ENCODE measurements at regions of chr16 and their contacts with region 1.

Region 1: GRCh38 chr16:66167564-66168291 is 198.8 kb upstream of the CDH5 start:
- DNase-seq: peak in 2 of 3 donors; percentile 13 to 26
- H3K4me3 ChIP-seq: peak overlapping the region in 1 of 3 experiments; percentile 47
- H3K4me3 Mint-ChIP-seq: peak overlapping the region in 1 of 2 donors; percentile 6
- H3K27ac ChIP-seq: peak overlapping the region; percentile 12 to 61
- H3K27ac Mint-ChIP-seq: peak overlapping the region; percentile 54 to 80 (median 68)
- H3K4me1 ChIP-seq: peaks cover 30 to 43% of the 10 kb centered on the region in 2 donors
- H3K4me1 Mint-ChIP-seq: peaks cover 40% of the 10 kb centered on the region
- H3K27me3 ChIP-seq: no peaks in the 10 kb centered on the region
- H3K27me3 Mint-ChIP-seq: peaks cover 0 to 4% (median 0%) of the 10 kb centered on the region in 3 donors
- CTCF ChIP-seq: no peak

Region 2: DNA sequence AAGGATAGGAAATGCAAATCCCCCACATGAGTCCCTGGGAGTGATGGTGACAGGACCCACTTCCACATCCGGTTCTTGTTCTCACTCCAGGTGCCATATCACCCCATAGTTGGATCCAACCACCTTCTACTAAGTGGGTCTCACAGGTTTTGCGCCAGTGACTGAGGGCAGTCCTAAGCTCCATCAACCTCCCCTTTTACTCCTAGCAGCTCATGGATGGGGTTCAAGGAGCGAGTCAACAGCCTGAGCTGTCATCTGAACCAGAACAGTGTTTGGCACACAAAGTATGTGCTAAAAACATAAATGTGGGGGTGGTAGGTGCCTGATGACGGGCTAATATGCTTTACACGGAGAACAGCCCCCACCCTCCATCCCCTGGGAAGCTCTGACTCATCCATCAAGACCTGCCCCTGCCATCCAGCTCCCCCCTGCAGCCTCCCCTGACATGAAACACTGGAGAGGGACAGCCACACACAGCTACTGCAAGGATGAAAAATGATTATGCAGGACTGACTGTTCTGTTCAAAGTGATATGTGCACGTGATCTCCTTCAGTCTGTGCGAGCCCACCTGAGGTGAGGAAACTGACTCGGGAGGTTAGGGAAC is 55.5 kb after region 1 on chr16:
- intact Hi-C with region 1: loop called in 1 of 2 experiments (anchors 10 kb)
- DNase-seq: no peak
- H3K4me3 ChIP-seq: no peak overlapping the region
- H3K4me3 Mint-ChIP-seq: peak overlapping the region in 1 of 2 donors; percentile 42
- H3K27ac ChIP-seq: no peak overlapping the region
- H3K27ac Mint-ChIP-seq: peak overlapping the region in 1 of 7 donors; percentile 57
- H3K4me1 ChIP-seq: peaks cover 24 to 30% of the 10 kb centered on the region in 2 donors
- H3K4me1 Mint-ChIP-seq: peaks cover 34% of the 10 kb centered on the region
- H3K27me3 ChIP-seq: no peaks in the 10 kb centered on the region
- H3K27me3 Mint-ChIP-seq: peaks cover 0 to 12% (median 9%) of the 10 kb centered on the region in 3 donors
- CTCF ChIP-seq: no peak